GM12878 (cell line): ENCODE measurements at regions of chr14 and their contacts with region 1.

Region 1: DNA sequence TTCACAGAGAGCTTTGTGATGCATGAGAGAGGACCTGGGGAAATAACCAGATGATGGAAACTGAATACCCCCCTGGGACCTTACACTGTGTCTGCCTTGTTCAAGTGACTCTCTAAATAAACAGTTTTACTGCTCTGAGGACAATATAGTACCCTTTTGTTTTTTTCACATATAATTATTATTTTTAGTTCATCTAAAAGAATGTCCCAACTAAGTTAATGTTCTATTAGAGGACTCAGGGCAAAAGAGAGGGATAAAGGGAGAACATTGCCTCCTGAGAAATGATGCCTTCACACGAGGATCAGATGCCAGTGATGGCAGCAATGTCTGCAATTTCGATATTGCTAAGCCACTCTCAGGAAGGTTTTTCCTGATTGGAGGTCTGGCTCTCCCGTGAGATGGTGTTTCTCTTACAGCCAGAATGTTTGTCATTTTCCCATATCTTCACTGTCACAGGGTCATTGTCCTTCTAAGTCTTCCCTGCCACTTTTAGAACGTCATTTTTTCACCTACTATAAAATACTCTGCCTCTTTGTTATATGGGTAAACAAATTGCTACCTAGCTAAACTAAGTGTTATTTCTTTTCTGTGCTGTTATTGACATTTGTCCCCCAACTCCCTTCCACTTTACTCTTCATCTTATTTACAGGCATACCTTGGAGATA is 201.6 kb downstream of the RAD51B start:
- DNase-seq: peak; percentile 71
- ATAC-seq: peak; percentile 97
- H3K4me3 ChIP-seq: no peak overlapping the region
- H3K27ac ChIP-seq: peak overlapping the region; percentile 61
- H3K4me1 ChIP-seq: no peaks in the 10 kb centered on the region
- H3K27me3 ChIP-seq: no peaks in the 10 kb centered on the region
- CTCF ChIP-seq: no peak
- EP300 ChIP-seq: no peak; a peak in 1 of 4 replicates
- POLR2A ChIP-seq: no peak
- RAD21 ChIP-seq: no peak

Region 2: GRCh38 chr14:68039593-68039992 is 18.5 kb after region 1 on chr14:
- CTCF ChIA-PET with region 1: interaction called, 5 read pairs
- POLR2A ChIA-PET with region 1: no interaction called
- RAD21 ChIA-PET with region 1: interaction called, 3 read pairs
- SMC1A ChIA-PET with region 1: interaction called, 12 read pairs
- in situ Hi-C with region 1: no loop called
- intact Hi-C with region 1: no loop called
- DNase-seq: no peak
- ATAC-seq: peak; percentile 26; the same call in 1 of the 3 replicates
- H3K4me3 ChIP-seq: no peak overlapping the region
- H3K27ac ChIP-seq: no peak overlapping the region
- H3K4me1 ChIP-seq: no peaks in the 10 kb centered on the region
- H3K27me3 ChIP-seq: no peaks in the 10 kb centered on the region
- CTCF ChIP-seq: no peak
- EP300 ChIP-seq: no peak
- POLR2A ChIP-seq: no peak
- RAD21 ChIP-seq: no peak